Psoas muscle (tissue), 8 donors: ENCODE measurements at regions of chr15 and their contacts with region 1.

Region 1: DNA sequence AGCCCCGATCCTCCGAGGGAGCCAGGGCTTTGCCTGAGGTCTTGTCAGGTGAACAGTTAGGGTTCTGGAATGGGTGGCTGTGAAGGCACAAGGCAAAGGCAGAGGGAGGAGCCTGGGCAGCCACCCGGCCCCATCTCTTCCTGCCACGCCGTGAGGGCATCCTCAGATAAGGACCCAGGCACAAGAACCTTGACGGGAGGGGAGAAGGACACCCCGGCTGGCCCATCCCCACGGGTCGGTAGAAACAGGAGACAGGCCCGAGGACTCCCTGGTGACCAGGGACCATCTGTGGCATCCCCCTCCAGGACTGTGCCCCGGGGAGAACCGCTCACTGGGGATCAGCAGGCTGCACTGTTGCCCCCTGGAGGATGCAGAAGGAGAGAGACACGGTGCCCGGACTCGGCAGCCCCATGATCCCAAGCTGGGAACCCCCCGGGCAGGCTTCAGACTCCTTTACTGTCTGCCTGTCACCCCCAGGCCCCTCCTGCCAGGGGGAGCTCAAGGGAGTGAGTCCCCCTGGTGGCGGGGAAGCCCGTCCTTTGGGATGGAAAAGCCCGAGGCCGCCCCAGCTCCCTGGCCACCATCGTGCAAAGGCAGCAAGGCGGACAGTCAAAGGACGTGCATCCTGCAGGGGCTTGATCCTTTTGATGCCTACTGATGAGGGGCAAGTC is 12.3 kb upstream of the PCSK6 start:
- DNase-seq: peak; percentile 43 to 67
- ATAC-seq: peak in 3 of 4 donors; percentile 29 to 47 (median 45)
- H3K4me3 ChIP-seq: no peak overlapping the region
- H3K27ac ChIP-seq: peak overlapping the region; percentile 85
- H3K4me1 ChIP-seq: peaks cover 35% of the 10 kb centered on the region
- H3K27me3 ChIP-seq: peaks cover 0 to 4% (median 0%) of the 10 kb centered on the region in 3 donors
- CTCF ChIP-seq: peak; percentile 29

Region 2: GRCh38 chr15:101307048-101307896 is 194.6 kb before region 1 on chr15:
- intact Hi-C with region 1: loop called in 1 of 2 experiments (anchors 5 kb)
- DNase-seq: no peak
- ATAC-seq: no peak
- H3K4me3 ChIP-seq: no peak overlapping the region
- H3K27ac ChIP-seq: no peak overlapping the region
- H3K4me1 ChIP-seq: no peaks in the 10 kb centered on the region
- H3K27me3 ChIP-seq: peaks cover 0 to 1% (median 0%) of the 10 kb centered on the region in 3 donors
- CTCF ChIP-seq: no peak

Region 3: GRCh38 chr15:101445562-101446517 is 56.0 kb before region 1 on chr15:
- intact Hi-C with region 1: loop called in 1 of 2 experiments (anchors 5 kb)
- DNase-seq: peak; percentile 70 to 90
- ATAC-seq: peak; percentile 83 to 88 (median 85)
- H3K4me3 ChIP-seq: no peak overlapping the region
- H3K27ac ChIP-seq: peak overlapping the region; percentile 81
- H3K4me1 ChIP-seq: peaks cover 25% of the 10 kb centered on the region
- H3K27me3 ChIP-seq: no peaks in the 10 kb centered on the region
- CTCF ChIP-seq: no peak

Region 4: GRCh38 chr15:101568309-101568708 is 66.5 kb after region 1 on chr15:
- intact Hi-C with region 1: no loop called
- DNase-seq: no peak
- ATAC-seq: no peak
- H3K4me3 ChIP-seq: no peak overlapping the region
- H3K27ac ChIP-seq: no peak overlapping the region
- H3K4me1 ChIP-seq: no peaks in the 10 kb centered on the region
- H3K27me3 ChIP-seq: peaks cover 0 to 2% (median 0%) of the 10 kb centered on the region in 3 donors
- CTCF ChIP-seq: no peak

Region 5: DNA sequence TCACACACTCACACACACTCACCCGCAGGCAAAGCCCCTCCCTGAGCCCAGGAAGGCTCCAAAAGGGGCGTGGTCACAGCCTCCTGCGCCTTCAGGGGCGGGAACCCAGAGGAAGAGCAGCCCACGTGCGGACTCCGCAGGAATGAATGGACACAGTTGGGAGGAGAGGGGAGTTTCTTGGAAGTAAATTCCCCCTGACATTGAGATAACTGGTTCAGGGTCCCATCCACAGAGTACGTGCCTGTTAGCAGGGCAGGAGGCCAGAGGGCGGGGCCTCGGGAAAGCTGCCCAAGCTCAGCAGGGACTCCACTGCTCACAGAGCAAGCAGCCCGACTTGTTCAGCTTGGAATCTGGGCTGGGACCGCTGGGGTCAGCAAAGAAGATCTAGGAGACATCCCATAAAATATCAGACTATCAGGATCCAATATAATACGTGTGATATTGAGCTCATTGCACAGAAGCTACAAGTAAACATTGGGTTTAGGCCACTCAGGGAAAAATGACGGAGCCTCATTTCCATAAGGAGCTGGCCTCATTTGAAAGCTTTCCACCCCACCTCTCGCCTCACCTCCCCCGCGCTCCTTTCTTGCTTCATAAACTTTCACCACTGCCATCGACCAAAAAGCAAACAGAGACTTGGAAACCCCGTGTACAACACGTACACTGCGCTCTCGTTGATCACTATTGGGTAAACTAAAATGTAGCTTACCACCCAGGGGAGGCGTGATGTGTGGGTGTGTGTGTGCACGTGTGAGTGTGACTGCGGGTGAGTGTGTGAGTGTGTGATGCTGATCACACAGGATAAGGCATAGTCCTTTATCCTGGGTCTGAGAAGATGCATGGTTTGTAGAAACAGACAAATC is 114.4 kb after region 1 on chr15:
- intact Hi-C with region 1: loop called in 1 of 2 experiments (anchors 5 kb)
- DNase-seq: peak; percentile 73 to 86
- ATAC-seq: peak; percentile 12 to 60 (median 48)
- H3K4me3 ChIP-seq: peak overlapping the region; percentile 32
- H3K27ac ChIP-seq: peak overlapping the region; percentile 67
- H3K4me1 ChIP-seq: peaks cover 76% of the 10 kb centered on the region
- H3K27me3 ChIP-seq: no peaks in the 10 kb centered on the region
- CTCF ChIP-seq: no peak